ENCODE measurements at regions of chr9 and their contacts with region 1.

Region 1: DNA sequence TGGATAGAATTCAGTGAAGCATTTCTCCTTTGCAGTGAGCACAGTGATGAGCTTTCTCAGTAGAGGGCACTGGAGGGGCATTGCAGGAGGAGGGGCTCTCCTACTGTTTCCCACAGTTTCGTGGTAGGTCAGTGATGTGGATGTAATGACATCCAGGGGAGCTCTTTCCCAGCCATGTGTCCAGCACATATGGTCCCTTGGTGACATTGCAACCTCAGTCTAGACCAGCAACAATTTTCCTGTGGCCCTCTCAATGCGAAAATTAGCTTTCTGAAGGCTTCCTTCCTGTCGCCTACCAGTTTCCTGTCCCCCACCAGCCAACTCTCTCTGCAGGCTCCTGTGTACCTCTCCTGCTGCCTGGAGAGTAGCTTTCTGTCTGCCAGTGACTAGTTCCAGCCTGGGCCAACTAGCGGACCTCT is 6.9 kb upstream of the PDCL start:
- DNase-seq: peak; percentile 37
- ATAC-seq: peak; percentile 79
- H3K4me3 Mint-ChIP-seq: peak overlapping the region; percentile 43
- H3K27ac Mint-ChIP-seq: peak overlapping the region; percentile 79
- H3K4me1 Mint-ChIP-seq: peaks cover 11% of the 10 kb centered on the region
- H3K27me3 Mint-ChIP-seq: no peaks in the 10 kb centered on the region

Region 2: GRCh38 chr9:121807823-121808278 is 1027.5 kb before region 1 on chr9:
- CTCF ChIA-PET with region 1: no interaction called
- POLR2A ChIA-PET with region 1: no interaction called
- intact Hi-C with region 1: no loop called
- DNase-seq: no peak
- ATAC-seq: no peak
- H3K4me3 Mint-ChIP-seq: no peak overlapping the region
- H3K27ac Mint-ChIP-seq: no peak overlapping the region
- H3K4me1 Mint-ChIP-seq: no peaks in the 10 kb centered on the region
- H3K27me3 Mint-ChIP-seq: peaks cover 3% of the 10 kb centered on the region

Region 3: GRCh38 chr9:122777930-122778671 is 57.2 kb before region 1 on chr9:
- CTCF ChIA-PET with region 1: no interaction called
- POLR2A ChIA-PET with region 1: no interaction called
- intact Hi-C with region 1: loop called in 1 of 2 experiments (anchors 10 kb)
- DNase-seq: no peak
- ATAC-seq: no peak
- H3K4me3 Mint-ChIP-seq: no peak overlapping the region
- H3K27ac Mint-ChIP-seq: no peak overlapping the region
- H3K4me1 Mint-ChIP-seq: no peaks in the 10 kb centered on the region
- H3K27me3 Mint-ChIP-seq: no peaks in the 10 kb centered on the region

Measured in activated CD4-positive, alpha-beta T cell treated with anti-CD3 and anti-CD28 coated beads for 36 hours (primary cell).